Activated naive CD4-positive, alpha-beta T cell treated with anti-CD3 and anti-CD28 coated beads for 36 hours (primary cell): ENCODE measurements at regions of chr2 and their contacts with region 1.

Region 1: DNA sequence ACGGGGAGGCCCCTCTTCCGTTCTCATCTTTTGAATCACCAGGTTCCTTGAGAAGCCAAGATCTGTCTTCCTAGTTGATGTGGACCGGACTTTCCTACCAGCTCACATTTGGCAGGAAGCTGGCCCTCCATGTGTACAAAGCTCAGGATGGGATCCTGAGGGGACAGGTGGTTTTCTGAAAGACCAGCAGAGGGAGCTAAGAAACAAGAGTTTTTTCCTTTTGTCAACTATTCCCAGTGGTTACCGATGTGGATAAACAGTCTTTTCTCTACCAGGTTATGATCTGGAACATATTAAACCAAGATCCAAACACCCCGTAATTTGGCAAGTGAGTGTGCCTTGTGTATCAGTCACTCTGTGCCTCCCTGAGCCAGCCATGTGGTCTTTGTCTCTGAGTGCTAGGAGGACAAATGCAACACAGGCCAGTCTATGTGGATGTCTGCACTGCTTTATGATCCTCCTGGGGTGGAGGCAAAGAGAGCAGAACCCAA is 25.1 kb upstream of the ARHGAP25 start:
- DNase-seq: peak; percentile 34
- H3K4me3 Mint-ChIP-seq: no peak overlapping the region
- H3K27ac Mint-ChIP-seq: no peak overlapping the region
- H3K4me1 Mint-ChIP-seq: peaks cover 20% of the 10 kb centered on the region
- H3K27me3 Mint-ChIP-seq: no peaks in the 10 kb centered on the region

Region 2: DNA sequence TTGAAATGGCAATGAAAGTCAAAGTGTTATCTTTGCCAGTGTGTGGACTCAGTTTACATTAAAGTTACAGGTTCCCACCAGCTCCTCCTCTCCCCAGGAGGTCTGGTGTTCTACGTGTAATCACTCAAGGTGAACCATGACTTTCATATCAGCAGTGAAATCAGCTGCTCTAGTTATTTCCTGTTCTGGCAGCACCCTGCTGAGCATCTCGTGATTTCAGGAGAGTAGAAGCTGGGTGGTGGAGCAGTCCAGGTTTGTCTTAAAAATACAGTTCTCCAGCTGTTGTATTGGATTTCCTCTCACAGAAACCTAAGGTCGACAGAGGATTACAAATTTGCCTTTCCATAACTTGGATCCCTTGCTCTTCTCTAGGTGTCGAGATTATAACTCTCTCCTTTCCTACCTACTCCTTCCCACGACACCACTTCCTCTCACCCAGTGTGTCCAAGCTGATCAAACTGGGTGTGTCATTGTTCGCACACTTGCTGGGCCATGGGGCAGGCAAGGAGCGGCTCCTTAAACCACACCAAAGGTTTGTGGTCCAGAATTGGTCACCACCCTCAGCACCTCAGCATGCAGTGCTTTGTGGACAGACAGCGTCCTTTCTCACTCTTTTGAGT is 12.1 kb after region 1 on chr2:
- CTCF ChIA-PET with region 1: interaction called, 19 read pairs
- intact Hi-C with region 1: no loop called
- DNase-seq: peak; percentile 62
- H3K4me3 Mint-ChIP-seq: peak overlapping the region; percentile 52
- H3K27ac Mint-ChIP-seq: peak overlapping the region; percentile 87
- H3K4me1 Mint-ChIP-seq: peaks cover 82% of the 10 kb centered on the region
- H3K27me3 Mint-ChIP-seq: no peaks in the 10 kb centered on the region

Region 3: DNA sequence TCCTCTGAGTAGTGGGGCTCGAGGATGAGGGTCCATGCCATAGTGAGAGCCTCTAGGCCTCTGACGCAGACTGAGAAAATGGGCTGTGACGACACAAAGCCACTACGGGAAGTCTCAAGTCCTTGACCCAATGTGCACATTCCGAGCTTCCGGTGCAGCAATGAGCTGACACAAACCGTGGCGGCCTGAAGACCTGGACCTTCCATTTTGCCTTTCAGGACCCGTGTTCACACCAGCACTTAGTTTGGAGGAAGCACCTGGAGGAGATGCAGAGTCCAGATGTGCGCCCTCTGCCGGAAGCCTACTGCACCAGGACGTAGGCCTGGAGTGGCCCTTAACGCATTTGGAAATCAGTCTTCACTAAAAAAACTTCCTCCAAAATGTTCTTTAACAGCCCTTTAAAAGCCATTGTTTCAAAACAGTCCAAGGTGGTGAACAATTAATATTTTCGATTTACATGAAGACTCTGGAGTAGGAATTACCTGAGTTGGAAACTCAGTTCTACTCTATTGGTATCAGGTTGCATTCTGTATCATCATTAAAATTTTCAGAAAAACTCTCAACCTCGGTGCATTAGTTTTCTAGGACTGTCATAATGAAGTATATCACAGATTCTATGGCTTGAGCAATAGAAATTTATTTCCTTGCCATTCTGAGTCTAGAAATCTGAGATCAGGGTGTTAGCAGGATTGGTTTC is 127.8 kb after region 1 on chr2:
- CTCF ChIA-PET with region 1: interaction called, 38 read pairs
- intact Hi-C with region 1: loop called (anchors 1 kb)
- DNase-seq: peak; percentile 85
- H3K4me3 Mint-ChIP-seq: no peak overlapping the region
- H3K27ac Mint-ChIP-seq: peak overlapping the region; percentile 61
- H3K4me1 Mint-ChIP-seq: peaks cover 34% of the 10 kb centered on the region
- H3K27me3 Mint-ChIP-seq: no peaks in the 10 kb centered on the region

Region 4: DNA sequence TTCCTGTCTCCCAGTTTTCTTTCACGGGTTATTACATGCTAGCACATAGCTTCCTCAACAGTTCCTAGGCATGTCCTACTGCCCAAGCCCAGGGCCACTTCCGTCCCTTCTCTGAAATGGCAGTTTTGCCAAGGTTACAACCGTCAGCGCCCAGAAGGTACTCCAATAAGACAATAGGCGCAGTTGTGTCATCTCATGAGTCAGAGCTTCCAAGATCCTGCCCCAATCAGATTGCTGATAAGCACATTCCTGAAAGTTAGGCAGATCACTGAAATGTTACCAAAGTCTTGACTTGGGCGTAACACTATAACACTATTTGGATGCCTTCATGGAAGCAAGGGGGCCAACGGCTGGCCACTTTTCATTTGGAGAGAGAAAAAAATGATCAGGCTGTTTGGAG is 209.0 kb after region 1 on chr2:
- CTCF ChIA-PET with region 1: interaction called, 71 read pairs
- intact Hi-C with region 1: no loop called
- DNase-seq: no peak
- H3K4me3 Mint-ChIP-seq: no peak overlapping the region
- H3K27ac Mint-ChIP-seq: no peak overlapping the region
- H3K4me1 Mint-ChIP-seq: no peaks in the 10 kb centered on the region
- H3K27me3 Mint-ChIP-seq: no peaks in the 10 kb centered on the region

Region 5: GRCh38 chr2:69095305-69095704 is 385.8 kb after region 1 on chr2:
- CTCF ChIA-PET with region 1: no interaction called
- intact Hi-C with region 1: no loop called
- DNase-seq: no peak
- H3K4me3 Mint-ChIP-seq: no peak overlapping the region
- H3K27ac Mint-ChIP-seq: no peak overlapping the region
- H3K4me1 Mint-ChIP-seq: no peaks in the 10 kb centered on the region
- H3K27me3 Mint-ChIP-seq: peaks cover 4% of the 10 kb centered on the region

Region 6: GRCh38 chr2:69386789-69387734 is 677.6 kb after region 1 on chr2 and contains the start of gene GFPT1:
- CTCF ChIA-PET with region 1: no interaction called
- intact Hi-C with region 1: no loop called
- DNase-seq: peak; percentile 93
- H3K4me3 Mint-ChIP-seq: peak within 1 kb of the TSS; percentile 93
- H3K27ac Mint-ChIP-seq: peak within 1 kb of the TSS; percentile 83
- H3K4me1 Mint-ChIP-seq: peaks cover 42% of the 10 kb centered on the region
- H3K27me3 Mint-ChIP-seq: no peaks in the 10 kb centered on the region
- total RNA-seq, gene GFPT1: 34.6 to 36.0 TPM